ENCODE measurements at regions of chr7 and their contacts with region 1.

Region 1: DNA sequence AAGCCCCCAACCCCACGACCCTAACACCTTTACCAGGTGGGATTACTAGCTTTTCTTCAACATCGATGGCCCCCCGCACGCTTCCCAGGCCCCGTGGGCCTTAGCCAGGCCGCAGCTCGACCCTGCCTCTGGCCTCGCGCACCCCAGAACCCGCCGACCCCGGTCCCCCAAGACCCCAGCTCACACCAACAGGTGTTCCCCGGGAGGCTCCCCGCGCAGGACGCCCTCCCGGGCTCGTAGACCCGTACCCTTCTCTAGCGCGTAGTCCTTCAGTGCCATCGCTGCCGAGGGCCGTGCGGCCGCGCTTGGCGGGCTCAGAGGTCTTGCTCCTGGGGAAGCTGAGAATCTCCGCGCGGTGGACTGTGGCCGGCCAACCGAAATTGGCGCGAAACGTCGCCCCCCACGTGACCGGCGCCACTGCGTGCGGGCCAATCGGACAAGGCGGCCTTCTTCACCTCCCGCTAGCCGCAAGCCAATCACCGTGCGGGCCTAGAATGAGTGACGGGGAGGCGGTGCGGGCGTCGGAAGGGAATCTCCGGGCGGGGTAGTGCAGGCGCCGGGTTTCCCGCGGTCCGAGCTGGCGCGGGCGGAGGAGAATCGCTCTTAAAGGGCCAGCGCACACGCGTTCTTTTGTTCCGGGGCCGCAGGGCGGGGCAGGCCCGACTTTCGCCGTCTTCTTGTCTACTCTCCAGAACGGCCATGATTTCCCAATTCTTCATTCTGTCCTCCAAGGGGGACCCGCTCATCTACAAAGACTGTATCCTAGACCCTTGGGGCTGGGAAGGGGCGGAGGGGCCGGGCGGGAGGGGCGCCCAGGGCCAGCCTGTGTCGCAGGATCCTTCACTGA is at the starts of genes AP4M1 and MCM7:
- DNase-seq: peak; percentile 97 to 100
- ATAC-seq: peak; percentile 89 to 91
- H3K4me3 ChIP-seq: peak within 1 kb of the TSS; percentile 98
- H3K27ac ChIP-seq: peak within 1 kb of the TSS; percentile 94 to 100
- H3K4me1 ChIP-seq: peaks cover 18% of the 10 kb centered on the region
- CTCF ChIP-seq: no peak
- EP300 ChIP-seq: no peak
- POLR2A ChIP-seq: no peak
- RAD21 ChIP-seq: no peak
- polyA plus RNA-seq, gene AP4M1: 13.7 and 16.6 TPM in 2 replicates
- polyA plus RNA-seq, gene MCM7: 138 and 145 TPM in 2 replicates

Region 2: GRCh38 chr7:100049441-100050311 is 51.6 kb before region 1 on chr7 and contains the start of gene ZSCAN21:
- CTCF ChIA-PET with region 1: interaction called, 3 read pairs
- POLR2A ChIA-PET with region 1: interaction called, 11 read pairs
- DNase-seq: peak; percentile 79 to 88
- ATAC-seq: peak; percentile 94 to 96
- H3K4me3 ChIP-seq: peak within 1 kb of the TSS; percentile 85
- H3K27ac ChIP-seq: peak within 1 kb of the TSS; percentile 89 to 93
- H3K4me1 ChIP-seq: peaks cover 7% of the 10 kb centered on the region; the same call in 2 of the 3 replicates
- CTCF ChIP-seq: peak; percentile 20; the same call in 1 of the 3 replicates
- EP300 ChIP-seq: no peak
- POLR2A ChIP-seq: peak; percentile 87
- RAD21 ChIP-seq: no peak
- polyA plus RNA-seq, gene ZSCAN21: 17.9 and 18.3 TPM in 2 replicates

Region 3: GRCh38 chr7:100088621-100089457 is 12.4 kb before region 1 on chr7 and contains the start of gene COPS6:
- CTCF ChIA-PET with region 1: interaction called, 5 read pairs
- POLR2A ChIA-PET with region 1: interaction called, 46 read pairs
- DNase-seq: peak; percentile 69 to 88
- ATAC-seq: peak; percentile 41 to 44
- H3K4me3 ChIP-seq: peak within 1 kb of the TSS; percentile 69
- H3K27ac ChIP-seq: peak within 1 kb of the TSS; percentile 88 to 94
- H3K4me1 ChIP-seq: peaks cover 14% of the 10 kb centered on the region
- CTCF ChIP-seq: no peak
- EP300 ChIP-seq: no peak
- POLR2A ChIP-seq: peak; percentile 92
- RAD21 ChIP-seq: no peak
- polyA plus RNA-seq, gene COPS6: 190 and 192 TPM in 2 replicates

Region 4: GRCh38 chr7:100111914-100112313 is 10.7 kb after region 1 on chr7:
- CTCF ChIA-PET with region 1: interaction called, 9 read pairs
- POLR2A ChIA-PET with region 1: interaction called, 19 read pairs
- DNase-seq: no peak
- ATAC-seq: peak in 1 of 2 experiments; percentile 6; a peak in 2 of 6 replicates
- H3K4me3 ChIP-seq: no peak overlapping the region
- H3K27ac ChIP-seq: no peak overlapping the region
- H3K4me1 ChIP-seq: no peaks in the 10 kb centered on the region
- CTCF ChIP-seq: no peak
- EP300 ChIP-seq: no peak
- POLR2A ChIP-seq: no peak
- RAD21 ChIP-seq: no peak

Region 5: GRCh38 chr7:100119062-100119700 is 17.9 kb after region 1 on chr7 and contains the starts of genes CNPY4 and TAF6:
- CTCF ChIA-PET with region 1: interaction called, 9 read pairs
- POLR2A ChIA-PET with region 1: interaction called, 10 read pairs
- DNase-seq: peak; percentile 98 to 99
- ATAC-seq: peak; percentile 84 to 86
- H3K4me3 ChIP-seq: peak within 1 kb of the TSS; percentile 81
- H3K27ac ChIP-seq: peak within 1 kb of the TSS; percentile 86 to 90
- H3K4me1 ChIP-seq: peaks cover 13% of the 10 kb centered on the region
- CTCF ChIP-seq: no peak
- EP300 ChIP-seq: no peak
- POLR2A ChIP-seq: peak; percentile 89
- RAD21 ChIP-seq: no peak
- polyA plus RNA-seq, gene CNPY4: 11.3 and 11.7 TPM in 2 replicates
- polyA plus RNA-seq, gene TAF6: 36.2 and 45.1 TPM in 2 replicates

Region 6: DNA sequence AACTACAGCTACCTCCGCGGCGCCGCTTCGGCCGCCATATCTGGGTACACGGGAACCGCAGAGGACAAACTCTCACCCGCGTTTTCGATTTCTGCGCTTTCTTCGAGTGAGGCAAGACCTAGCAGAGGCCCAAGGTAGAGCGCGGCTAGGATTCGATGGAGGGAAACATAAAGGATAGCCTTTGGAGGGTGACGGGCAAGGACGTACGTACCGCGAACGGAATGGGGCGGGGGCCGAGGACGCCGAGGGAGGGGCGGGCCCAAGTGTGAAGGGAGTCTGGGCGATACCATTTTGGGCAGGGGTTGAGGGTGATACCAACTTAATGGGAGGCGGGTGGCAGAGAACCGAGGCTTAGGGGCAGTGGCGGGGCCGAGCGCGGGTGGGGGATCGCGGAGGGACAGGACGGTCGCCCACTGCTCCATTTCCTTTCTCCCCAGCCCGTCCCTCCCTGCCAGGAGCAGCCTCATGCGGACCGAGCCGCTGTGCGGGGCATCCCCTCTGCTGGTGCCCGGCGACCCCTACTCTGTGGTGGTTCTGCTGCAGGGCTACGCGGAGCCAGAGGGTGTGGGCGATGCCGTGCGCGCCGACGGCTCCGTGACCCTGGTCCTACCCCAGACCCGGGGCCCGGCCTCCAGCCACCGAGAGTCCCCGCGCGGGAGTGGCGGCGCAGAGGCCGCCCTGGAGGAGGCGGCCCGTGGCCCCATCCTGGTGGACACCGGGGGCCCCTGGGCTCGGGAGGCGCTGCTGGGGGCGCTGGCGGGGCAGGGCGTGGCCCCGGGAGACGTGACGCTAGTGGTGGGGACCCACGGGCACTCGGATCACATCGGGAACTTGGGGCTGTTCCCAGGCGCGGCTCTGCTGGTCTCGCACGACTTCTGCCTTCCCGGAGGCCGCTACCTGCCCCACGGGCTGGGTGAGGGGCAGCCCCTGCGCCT is 26.0 kb after region 1 on chr7 and contains the start of gene MBLAC1:
- CTCF ChIA-PET with region 1: interaction called, 33 read pairs
- POLR2A ChIA-PET with region 1: interaction called, 11 read pairs
- DNase-seq: peak; percentile 82 to 95
- ATAC-seq: peak; percentile 76 to 83
- H3K4me3 ChIP-seq: peak within 1 kb of the TSS; percentile 64
- H3K27ac ChIP-seq: peak within 1 kb of the TSS; percentile 90 to 94
- H3K4me1 ChIP-seq: peaks cover 30% of the 10 kb centered on the region
- CTCF ChIP-seq: no peak
- EP300 ChIP-seq: no peak
- POLR2A ChIP-seq: peak; percentile 81
- RAD21 ChIP-seq: no peak
- polyA plus RNA-seq, gene MBLAC1: 0.45 and 0.63 TPM in 2 replicates

Region 7: DNA sequence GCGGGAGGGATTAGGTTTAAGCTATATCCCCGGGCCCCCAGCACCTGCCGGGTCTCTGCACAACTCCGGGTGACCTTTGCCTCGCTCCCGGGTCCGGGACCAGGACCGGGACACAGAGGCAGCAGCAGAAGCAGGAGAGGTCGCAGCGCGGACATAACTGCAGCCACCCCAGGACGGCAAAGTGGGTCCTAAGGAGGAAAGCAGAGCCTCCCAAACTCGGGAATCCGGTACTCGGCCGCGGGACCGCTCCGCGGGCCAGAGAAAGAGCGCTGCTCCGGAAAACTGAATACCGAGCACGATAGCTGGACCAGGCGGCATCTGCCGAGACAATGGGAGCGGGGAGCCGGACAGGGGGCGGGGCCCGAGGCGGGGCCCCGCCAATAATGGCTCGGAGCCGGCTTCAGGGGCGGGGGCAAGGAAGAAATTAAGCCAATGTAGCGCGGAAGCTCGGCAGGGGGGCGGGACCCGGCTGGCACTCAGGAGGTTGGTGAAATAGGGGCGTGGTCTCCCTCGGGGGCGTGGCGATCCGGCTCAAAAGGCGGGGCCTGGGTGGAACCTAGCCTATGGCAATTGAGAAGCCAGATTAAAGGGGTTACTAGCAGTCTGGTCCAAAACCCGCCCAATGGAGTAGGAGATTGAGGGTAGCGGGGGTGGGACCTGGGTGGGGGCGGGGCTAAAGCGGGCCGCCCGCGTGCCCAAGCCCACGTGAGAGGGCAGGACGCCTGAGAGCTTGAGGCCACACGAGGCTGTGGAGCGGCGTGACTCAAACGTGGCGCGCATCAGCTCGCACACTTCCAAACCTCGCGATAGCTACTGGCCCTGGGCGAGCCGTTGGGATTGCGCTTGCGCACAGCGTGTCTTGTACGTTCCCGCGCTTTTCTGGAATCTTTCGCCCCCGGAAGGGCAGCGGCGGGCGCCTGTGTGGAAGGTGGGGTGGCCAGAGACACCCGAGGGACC is 76.1 kb after region 1 on chr7 and contains the starts of genes GPC2 and STAG3:
- CTCF ChIA-PET with region 1: no interaction called
- POLR2A ChIA-PET with region 1: no interaction called
- DNase-seq: peak; percentile 87 to 96
- ATAC-seq: peak; percentile 89 to 95
- H3K4me3 ChIP-seq: peak within 1 kb of the TSS; percentile 64
- H3K27ac ChIP-seq: peak within 1 kb of the TSS; percentile 68 to 83
- H3K4me1 ChIP-seq: peaks cover 9% of the 10 kb centered on the region; the same call in 2 of the 3 replicates
- CTCF ChIP-seq: no peak
- EP300 ChIP-seq: no peak
- POLR2A ChIP-seq: peak; percentile 19; the same call in 1 of the 2 replicates
- RAD21 ChIP-seq: no peak
- polyA plus RNA-seq, gene GPC2: 1.1 and 1.8 TPM in 2 replicates
- polyA plus RNA-seq, gene STAG3: 0.25 and 0.36 TPM in 2 replicates